Panc1 (cell line): ENCODE measurements at regions of chr7 and their contacts with region 1.

Region 1: DNA sequence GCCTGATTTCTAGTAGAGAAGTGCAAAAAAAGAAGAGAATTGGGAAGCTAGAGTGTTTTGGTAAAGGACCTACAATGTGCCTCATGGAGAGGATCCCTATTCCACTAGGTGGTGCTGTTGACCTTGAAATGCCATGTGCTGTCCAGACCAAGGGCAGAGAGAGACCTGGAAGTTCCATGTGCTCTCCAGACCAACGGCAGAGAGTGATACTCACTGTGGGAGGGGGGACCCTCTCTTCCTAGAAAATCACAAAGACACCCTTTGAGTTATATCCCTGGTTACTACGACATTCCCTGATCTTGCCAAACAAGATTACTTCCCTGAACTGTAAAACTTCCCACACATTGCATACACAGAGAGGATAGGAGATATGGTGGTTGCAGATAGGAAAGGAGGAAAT is 212.7 kb upstream of the ZNF804B start:
- DNase-seq: peak; percentile 56
- ATAC-seq: peak; percentile 89
- H3K4me3 ChIP-seq: no peak overlapping the region
- H3K27ac ChIP-seq: no peak overlapping the region
- H3K4me1 ChIP-seq: no peaks in the 10 kb centered on the region
- H3K27me3 ChIP-seq: no peaks in the 10 kb centered on the region
- CTCF ChIP-seq: peak; percentile 75

Region 2: GRCh38 chr7:88243345-88243909 is 303.4 kb before region 1 on chr7:
- CTCF ChIA-PET with region 1: interaction called, 6 read pairs
- POLR2A ChIA-PET with region 1: no interaction called
- in situ Hi-C with region 1: no loop called
- intact Hi-C with region 1: loop called (anchors 10 kb)
- DNase-seq: peak; percentile 48
- ATAC-seq: peak; percentile 81
- H3K4me3 ChIP-seq: no peak overlapping the region
- H3K27ac ChIP-seq: no peak overlapping the region
- H3K4me1 ChIP-seq: no peaks in the 10 kb centered on the region
- H3K27me3 ChIP-seq: no peaks in the 10 kb centered on the region
- CTCF ChIP-seq: peak; percentile 72

Region 3: DNA sequence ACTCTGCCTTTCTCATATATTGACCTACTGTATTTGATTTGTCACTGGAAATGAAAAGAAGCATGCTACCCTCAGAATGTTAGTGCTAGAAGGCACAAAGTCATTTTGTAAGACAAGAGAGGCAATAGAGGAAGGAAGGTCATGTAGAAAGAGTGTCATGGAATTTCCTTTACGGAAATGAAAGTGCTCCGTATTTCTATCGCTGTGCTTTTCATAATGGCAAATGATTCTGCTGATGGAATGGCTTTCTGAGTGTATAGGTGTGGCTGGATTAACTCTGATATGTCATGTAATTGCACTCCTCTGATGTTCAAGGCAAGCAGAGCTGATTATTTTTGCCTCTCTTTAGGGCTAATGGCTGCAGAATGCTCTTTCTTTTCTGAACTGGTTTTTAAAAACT is 224.7 kb before region 1 on chr7:
- CTCF ChIA-PET with region 1: no interaction called
- POLR2A ChIA-PET with region 1: no interaction called
- in situ Hi-C with region 1: no loop called
- intact Hi-C with region 1: no loop called
- DNase-seq: no peak
- ATAC-seq: no peak
- H3K4me3 ChIP-seq: no peak overlapping the region
- H3K27ac ChIP-seq: no peak overlapping the region
- H3K4me1 ChIP-seq: no peaks in the 10 kb centered on the region
- H3K27me3 ChIP-seq: no peaks in the 10 kb centered on the region
- CTCF ChIP-seq: no peak

Region 4: DNA sequence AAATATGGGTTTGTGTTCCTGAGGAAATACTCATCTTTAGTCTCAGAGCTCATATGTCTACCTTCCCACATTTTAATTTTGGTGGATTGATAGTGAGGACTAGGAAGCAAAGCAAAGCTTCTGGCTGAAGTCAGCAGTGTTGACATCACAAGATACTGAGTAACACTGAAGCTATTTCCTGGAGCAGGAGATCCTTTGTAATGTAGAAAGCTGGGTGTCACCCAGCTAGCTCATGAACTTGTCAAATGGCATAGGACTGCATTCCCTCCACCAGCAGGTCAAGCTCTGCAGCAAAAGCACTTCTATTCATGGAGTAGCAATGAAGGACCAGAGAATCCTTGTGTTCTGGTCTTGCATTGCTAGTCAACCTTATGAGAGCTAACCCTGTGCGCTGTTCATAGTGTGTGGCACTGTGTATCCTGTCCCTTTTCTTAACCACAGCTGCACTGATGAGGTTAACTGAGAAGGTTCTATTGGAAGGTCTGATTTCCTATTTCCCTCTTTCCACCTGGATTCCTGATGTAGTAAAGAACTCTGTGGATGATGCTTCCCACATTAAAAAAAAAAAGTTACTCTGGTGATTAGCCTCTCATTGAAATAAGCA is 117.9 kb after region 1 on chr7:
- CTCF ChIA-PET with region 1: no interaction called
- POLR2A ChIA-PET with region 1: no interaction called
- in situ Hi-C with region 1: no loop called
- intact Hi-C with region 1: no loop called
- DNase-seq: no peak
- ATAC-seq: no peak
- H3K4me3 ChIP-seq: no peak overlapping the region
- H3K27ac ChIP-seq: no peak overlapping the region
- H3K4me1 ChIP-seq: no peaks in the 10 kb centered on the region
- H3K27me3 ChIP-seq: no peaks in the 10 kb centered on the region
- CTCF ChIP-seq: no peak

Region 5: DNA sequence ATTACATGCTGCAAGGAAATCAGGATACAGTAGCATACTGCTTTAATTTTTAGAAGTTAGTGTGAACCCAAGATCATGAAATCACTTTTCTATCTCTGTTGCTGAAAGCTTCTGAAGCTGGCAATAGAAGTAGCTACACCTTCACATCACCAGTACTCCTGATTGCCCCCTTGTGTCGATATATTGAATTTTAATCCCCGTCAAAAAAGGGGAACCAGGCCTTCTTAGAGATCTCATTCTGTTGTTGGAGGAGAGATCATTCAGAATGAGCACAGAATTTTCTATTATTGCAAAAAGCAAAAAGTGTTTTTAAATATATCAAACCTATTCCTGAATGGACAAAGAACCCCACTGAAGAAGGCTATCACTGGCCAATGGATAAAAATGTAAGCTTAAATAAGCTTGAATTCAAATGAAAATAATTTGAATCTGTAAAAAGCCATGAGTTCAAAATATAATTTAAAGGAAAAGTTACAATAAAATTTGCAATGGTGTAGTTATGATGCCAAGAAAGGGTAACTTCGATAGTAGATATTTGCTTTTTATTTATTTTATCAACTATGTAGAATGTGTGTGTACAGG is 288.4 kb after region 1 on chr7:
- CTCF ChIA-PET with region 1: no interaction called
- POLR2A ChIA-PET with region 1: no interaction called
- in situ Hi-C with region 1: no loop called
- intact Hi-C with region 1: loop called (anchors 10 kb)
- DNase-seq: peak; percentile 7
- ATAC-seq: no peak
- H3K4me3 ChIP-seq: no peak overlapping the region
- H3K27ac ChIP-seq: no peak overlapping the region
- H3K4me1 ChIP-seq: no peaks in the 10 kb centered on the region
- H3K27me3 ChIP-seq: no peaks in the 10 kb centered on the region
- CTCF ChIP-seq: peak; percentile 36; the same call in 1 of the 2 replicates

Region 6: GRCh38 chr7:89622838-89623672 is 1076.2 kb after region 1 on chr7:
- CTCF ChIA-PET with region 1: no interaction called
- POLR2A ChIA-PET with region 1: no interaction called
- in situ Hi-C with region 1: no loop called
- intact Hi-C with region 1: loop called (anchors 10 kb)
- DNase-seq: peak; percentile 32
- ATAC-seq: peak; percentile 72
- H3K4me3 ChIP-seq: no peak overlapping the region
- H3K27ac ChIP-seq: no peak overlapping the region
- H3K4me1 ChIP-seq: no peaks in the 10 kb centered on the region
- H3K27me3 ChIP-seq: no peaks in the 10 kb centered on the region
- CTCF ChIP-seq: peak; percentile 73

Region 7: GRCh38 chr7:90424720-90425119 is 1877.9 kb after region 1 on chr7:
- CTCF ChIA-PET with region 1: no interaction called
- POLR2A ChIA-PET with region 1: no interaction called
- in situ Hi-C with region 1: no loop called
- intact Hi-C with region 1: loop called (anchors 10 kb)
- DNase-seq: no peak
- ATAC-seq: no peak
- H3K4me3 ChIP-seq: no peak overlapping the region
- H3K27ac ChIP-seq: no peak overlapping the region
- H3K4me1 ChIP-seq: no peaks in the 10 kb centered on the region
- H3K27me3 ChIP-seq: no peaks in the 10 kb centered on the region
- CTCF ChIP-seq: no peak